Heart right ventricle (tissue), 16 donors: ENCODE measurements at regions of chr6 and their contacts with region 1.

Region 1: GRCh38 chr6:44524476-44525227 is 137.1 kb downstream of the CDC5L start:
- DNase-seq: no peak
- ATAC-seq: no peak
- H3K4me3 ChIP-seq: no peak overlapping the region
- H3K27ac ChIP-seq: no peak overlapping the region
- H3K4me1 ChIP-seq: no peaks in the 10 kb centered on the region
- H3K27me3 ChIP-seq: peaks cover 0 to 9% (median 5%) of the 10 kb centered on the region in 7 donors
- CTCF ChIP-seq: no peak

Region 2: DNA sequence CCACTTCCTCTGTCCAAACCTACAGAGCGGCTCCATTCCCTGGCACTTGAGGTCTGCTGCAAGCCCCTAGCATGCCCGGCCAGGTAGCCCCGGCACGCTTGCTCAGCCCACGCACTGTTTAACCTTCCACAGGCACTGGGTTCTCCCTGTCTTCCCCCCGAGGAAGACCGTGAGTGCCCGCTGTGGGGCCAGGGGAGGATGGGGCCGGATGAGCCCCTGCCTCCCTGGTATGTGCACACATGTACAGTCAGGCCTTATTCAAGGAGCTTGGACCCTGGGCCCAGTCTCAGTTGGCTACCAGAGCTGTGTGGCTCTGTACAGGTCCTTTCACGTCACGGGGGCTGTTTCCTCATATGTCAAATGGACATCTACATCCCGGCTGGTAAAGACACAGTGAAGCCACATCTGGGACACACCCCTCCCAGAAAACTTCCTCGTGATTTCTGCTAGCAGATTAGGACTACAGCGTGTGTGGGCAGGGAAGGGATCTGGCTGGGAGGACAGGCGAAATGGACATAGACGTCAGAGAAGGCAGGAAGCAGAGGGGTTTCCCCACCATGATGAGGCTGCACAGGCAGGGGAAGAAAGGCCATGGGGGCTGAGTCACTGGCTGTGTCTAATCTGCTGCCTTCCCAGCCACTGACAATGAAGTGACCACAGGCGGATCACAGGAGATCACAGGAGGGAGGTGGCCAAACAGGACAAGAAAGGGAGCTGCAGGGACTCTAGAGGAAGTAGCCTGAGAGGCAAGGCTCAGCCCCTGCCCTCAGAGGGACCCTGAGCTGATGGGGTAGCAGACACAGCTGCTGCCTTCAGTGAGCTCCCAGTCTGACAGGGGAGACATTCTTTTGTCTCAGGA is 460.3 kb before region 1 on chr6:
- intact Hi-C with region 1: no loop called
- DNase-seq: peak in 1 of 2 donors; percentile 70
- ATAC-seq: peak; percentile 11 to 84 (median 54)
- H3K4me3 ChIP-seq: no peak overlapping the region
- H3K27ac ChIP-seq: peak overlapping the region in 8 of 10 donors; percentile 40 to 97 (median 75)
- H3K4me1 ChIP-seq: peaks cover 21 to 79% (median 56%) of the 10 kb centered on the region in 9 donors
- H3K27me3 ChIP-seq: no peaks in the 10 kb centered on the region
- CTCF ChIP-seq: no peak

Region 3: DNA sequence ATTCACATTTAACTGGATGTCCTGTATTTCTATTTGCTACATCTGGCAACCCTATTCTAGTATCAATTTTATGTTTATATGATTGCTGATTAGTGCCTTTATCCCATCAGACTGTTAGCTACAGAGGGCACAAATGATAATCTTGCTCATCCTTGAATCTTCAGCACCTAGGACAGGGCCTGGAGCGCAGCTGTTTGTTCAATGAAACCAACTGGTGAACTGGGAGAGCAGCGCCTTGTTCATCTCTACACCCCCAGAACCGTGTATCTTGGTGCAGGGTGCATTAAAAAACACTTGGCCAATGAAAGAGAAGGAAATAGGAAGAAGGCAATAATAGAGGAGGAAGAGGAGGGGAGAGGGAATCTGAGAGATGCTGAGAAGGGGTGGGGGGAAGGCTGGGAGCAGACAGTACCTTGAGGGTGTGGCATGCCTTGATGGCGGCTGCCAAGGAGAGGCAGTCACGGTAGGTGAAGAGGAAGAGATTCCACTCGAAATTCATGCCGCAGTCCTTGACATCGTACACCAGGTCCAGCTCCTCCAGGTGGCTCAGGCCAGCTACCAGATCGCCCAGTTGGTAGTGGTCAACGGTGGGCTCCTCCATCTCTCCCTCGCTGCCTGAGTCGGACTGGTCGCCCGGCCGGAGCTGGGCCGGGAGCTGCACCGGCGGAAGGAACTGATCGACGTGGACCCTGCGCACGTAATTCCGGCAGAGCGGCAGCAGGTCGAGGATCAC is 238.9 kb before region 1 on chr6:
- intact Hi-C with region 1: no loop called
- DNase-seq: no peak
- ATAC-seq: no peak
- H3K4me3 ChIP-seq: no peak overlapping the region
- H3K27ac ChIP-seq: no peak overlapping the region
- H3K4me1 ChIP-seq: peaks cover 0 to 5% (median 0%) of the 10 kb centered on the region in 9 donors
- H3K27me3 ChIP-seq: peaks cover 5 to 84% (median 47%) of the 10 kb centered on the region in 7 donors
- CTCF ChIP-seq: no peak

Region 4: GRCh38 chr6:45388328-45388727 is 863.7 kb after region 1 on chr6:
- intact Hi-C with region 1: loop called in 1 of 10 experiments (anchors 5 kb)
- DNase-seq: no peak
- ATAC-seq: no peak
- H3K4me3 ChIP-seq: no peak overlapping the region
- H3K27ac ChIP-seq: no peak overlapping the region
- H3K4me1 ChIP-seq: no peaks in the 10 kb centered on the region
- H3K27me3 ChIP-seq: peaks cover 0 to 18% (median 2%) of the 10 kb centered on the region in 7 donors
- CTCF ChIP-seq: no peak